Cardiac septum (tissue), 1 donor: ENCODE measurements at regions of chr6 and their contacts with region 1.

Region 1: DNA sequence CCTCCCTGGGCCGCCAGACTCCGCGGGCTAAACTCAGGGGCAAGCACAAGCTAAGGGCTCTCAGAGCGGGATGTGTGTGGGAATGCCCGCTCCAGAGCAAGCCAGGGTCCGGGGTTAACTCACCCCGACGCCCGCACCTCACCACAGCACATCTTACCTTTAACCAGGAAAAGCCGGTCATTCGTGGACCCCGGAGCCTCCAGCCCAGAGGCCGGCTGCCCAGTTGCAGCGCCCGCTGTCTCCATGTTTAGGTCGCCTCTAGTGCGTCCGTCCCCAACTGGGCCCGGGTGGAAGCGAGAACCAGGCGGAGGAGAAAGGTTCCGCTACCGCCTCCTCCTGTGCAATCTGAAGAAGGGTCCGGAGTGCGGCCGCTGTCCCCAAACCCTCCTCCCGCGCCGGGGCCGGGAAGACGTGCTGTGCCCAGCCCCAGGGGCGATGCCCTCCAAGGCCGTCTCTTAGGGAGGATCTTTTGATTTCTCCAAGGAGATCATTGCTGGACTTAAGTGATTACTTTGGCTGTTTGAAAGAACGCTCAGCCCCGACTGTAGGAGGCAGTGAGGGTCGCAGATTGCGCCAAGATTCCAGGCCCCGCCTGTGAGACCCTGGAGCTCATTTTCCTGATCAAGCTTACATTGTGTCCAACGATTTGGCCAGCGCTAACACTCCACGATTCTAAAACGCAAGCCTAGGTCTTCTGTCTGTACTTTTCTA is at the start of gene TMEM242:
- DNase-seq: peak; percentile 97
- total RNA-seq, gene TMEM242: 18.9 TPM

Region 2: DNA sequence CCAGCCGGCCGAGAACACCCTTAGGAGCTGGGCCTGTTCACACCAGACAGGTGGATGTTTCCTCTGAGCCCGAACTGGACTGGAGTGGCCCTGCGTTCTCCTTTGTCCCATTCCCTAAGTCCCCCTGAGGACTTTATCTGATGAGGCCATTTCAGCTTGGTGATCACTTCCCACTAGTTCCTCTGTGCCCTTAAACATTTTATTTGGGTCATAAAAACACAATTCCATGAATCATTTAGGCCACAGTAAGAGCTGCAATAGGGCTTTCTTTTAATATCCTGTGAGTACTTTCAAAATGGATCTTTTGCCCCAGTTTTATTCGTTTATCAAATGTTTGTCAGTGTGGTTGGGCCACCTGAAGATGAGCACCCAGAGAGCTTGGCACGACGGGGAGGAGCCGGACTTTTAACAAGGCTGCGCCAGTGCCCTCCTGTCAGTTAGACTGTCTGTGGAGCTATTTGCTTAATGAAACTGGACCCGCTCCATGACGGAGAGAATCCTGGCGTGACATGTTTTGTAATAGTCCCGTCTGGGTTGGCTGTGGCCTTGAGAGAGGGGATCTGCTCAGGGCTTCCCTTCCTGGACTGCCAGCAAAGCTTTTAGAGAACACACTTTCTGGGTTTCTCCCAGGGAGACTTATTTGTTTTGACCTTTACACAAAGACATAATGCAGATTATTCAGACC is 111.1 kb after region 1 on chr6:
- intact Hi-C with region 1: loop called (anchors 5 kb)
- DNase-seq: no peak